Stomach (tissue), 19 donors: ENCODE measurements at regions of chr12 and their contacts with region 1.

Region 1: GRCh38 chr12:46124848-46125619 is 134.7 kb upstream of the SCAF11 start:
- DNase-seq: peak; percentile 41 to 91
- H3K4me3 ChIP-seq: peak overlapping the region in 3 of 4 donors; percentile 11 to 15 (median 14)
- H3K27ac ChIP-seq: no peak overlapping the region
- H3K4me1 ChIP-seq: peaks cover 0 to 22% (median 8%) of the 10 kb centered on the region in 4 donors
- H3K27me3 ChIP-seq: no peaks in the 10 kb centered on the region
- CTCF ChIP-seq: peak in 5 of 7 experiments; percentile 26 to 66 (median 62)
- EP300 ChIP-seq: no peak
- POLR2A ChIP-seq: no peak

Region 2: DNA sequence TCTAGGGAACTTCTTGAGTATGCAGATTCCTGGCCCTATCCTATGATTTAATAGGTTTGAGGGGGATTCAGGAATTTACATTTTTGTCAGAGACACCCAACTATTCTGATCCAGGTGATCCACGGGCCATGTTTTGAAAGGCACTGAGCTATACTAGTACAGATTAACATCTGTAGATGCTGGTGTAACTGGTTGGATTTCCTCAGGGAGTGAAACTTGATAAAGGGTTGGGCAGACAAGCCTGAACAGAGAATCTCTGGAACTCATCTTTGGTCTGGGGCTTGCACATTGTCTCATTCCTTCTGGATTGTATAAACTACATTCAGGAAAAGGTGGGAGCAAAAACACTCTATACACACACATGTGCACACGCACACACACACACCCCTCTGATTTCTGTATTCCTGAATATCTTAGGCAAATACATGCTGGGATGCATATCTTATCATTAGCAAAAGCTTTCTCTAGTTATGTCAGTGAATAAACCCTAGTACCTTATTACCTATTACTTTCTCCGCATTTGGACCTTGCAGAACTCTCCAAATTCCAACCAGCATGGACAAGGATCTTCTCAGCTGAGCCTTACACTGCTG is 39.2 kb after region 1 on chr12:
- intact Hi-C with region 1: no loop called
- DNase-seq: no peak
- H3K4me3 ChIP-seq: no peak overlapping the region
- H3K27ac ChIP-seq: no peak overlapping the region
- H3K4me1 ChIP-seq: peaks cover 0 to 20% (median 4%) of the 10 kb centered on the region in 4 donors
- H3K27me3 ChIP-seq: no peaks in the 10 kb centered on the region
- CTCF ChIP-seq: no peak
- EP300 ChIP-seq: no peak
- POLR2A ChIP-seq: no peak

Region 3: DNA sequence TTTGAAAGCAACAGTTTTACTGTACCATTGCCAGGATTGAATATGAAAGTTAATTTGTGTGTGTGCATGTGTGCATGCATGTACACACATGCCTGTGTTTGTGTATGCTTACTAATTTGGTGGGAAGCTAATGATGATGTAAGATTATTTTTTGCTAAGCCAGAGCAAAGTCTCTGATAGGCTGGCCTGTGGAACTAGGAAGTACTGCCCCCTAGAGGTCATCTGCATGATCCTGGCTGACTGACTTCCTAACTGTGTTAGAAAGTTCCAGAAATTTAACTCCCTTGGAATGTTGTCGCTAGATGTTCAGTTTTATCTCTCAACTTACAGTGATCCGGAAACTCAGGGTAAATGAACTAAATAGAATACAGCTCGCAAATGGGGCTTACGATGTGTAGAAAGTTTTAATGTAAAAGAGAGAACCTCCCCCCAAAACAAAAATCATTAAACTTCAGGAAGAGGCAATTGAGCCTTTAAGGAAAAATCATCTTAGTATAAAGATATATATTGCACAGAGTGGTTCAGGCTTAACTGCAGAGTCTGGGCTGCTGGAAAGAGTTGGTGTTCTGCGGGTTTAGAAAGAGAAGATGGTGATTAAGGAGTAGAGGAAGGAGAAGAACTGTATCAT is 178.1 kb after region 1 on chr12:
- intact Hi-C with region 1: loop called (anchors 10 kb)
- DNase-seq: peak; percentile 45 to 57
- H3K4me3 ChIP-seq: no peak overlapping the region
- H3K27ac ChIP-seq: no peak overlapping the region
- H3K4me1 ChIP-seq: peaks cover 0 to 10% (median 0%) of the 10 kb centered on the region in 4 donors
- H3K27me3 ChIP-seq: no peaks in the 10 kb centered on the region
- CTCF ChIP-seq: peak in 4 of 7 experiments; percentile 35 to 59 (median 54)
- EP300 ChIP-seq: no peak
- POLR2A ChIP-seq: no peak